Colonic mucosa (tissue), 4 donors: ENCODE measurements at regions of chr10 and their contacts with region 1.

Region 1: GRCh38 chr10:107409522-107409921 is 245.0 kb upstream of the SORCS1 start:
- DNase-seq: no peak
- H3K4me3 ChIP-seq: no peak overlapping the region
- H3K27ac ChIP-seq: no peak overlapping the region
- H3K4me1 ChIP-seq: no peaks in the 10 kb centered on the region
- H3K27me3 ChIP-seq: no peaks in the 10 kb centered on the region
- CTCF ChIP-seq: no peak

Region 2: GRCh38 chr10:107671960-107672359 is 262.4 kb after region 1 on chr10:
- intact Hi-C with region 1: no loop called
- DNase-seq: no peak
- H3K4me3 ChIP-seq: no peak overlapping the region
- H3K27ac ChIP-seq: no peak overlapping the region
- H3K4me1 ChIP-seq: no peaks in the 10 kb centered on the region
- H3K27me3 ChIP-seq: no peaks in the 10 kb centered on the region
- CTCF ChIP-seq: no peak

Region 3: GRCh38 chr10:107814865-107815487 is 405.5 kb after region 1 on chr10:
- intact Hi-C with region 1: loop called (anchors 2 kb)
- DNase-seq: peak; percentile 72
- H3K4me3 ChIP-seq: no peak overlapping the region
- H3K27ac ChIP-seq: no peak overlapping the region
- H3K4me1 ChIP-seq: no peaks in the 10 kb centered on the region
- H3K27me3 ChIP-seq: no peaks in the 10 kb centered on the region
- CTCF ChIP-seq: peak; percentile 60